Motor neuron (in vitro differentiated cells): ENCODE measurements at regions of chr9 and their contacts with region 1.

Region 1: DNA sequence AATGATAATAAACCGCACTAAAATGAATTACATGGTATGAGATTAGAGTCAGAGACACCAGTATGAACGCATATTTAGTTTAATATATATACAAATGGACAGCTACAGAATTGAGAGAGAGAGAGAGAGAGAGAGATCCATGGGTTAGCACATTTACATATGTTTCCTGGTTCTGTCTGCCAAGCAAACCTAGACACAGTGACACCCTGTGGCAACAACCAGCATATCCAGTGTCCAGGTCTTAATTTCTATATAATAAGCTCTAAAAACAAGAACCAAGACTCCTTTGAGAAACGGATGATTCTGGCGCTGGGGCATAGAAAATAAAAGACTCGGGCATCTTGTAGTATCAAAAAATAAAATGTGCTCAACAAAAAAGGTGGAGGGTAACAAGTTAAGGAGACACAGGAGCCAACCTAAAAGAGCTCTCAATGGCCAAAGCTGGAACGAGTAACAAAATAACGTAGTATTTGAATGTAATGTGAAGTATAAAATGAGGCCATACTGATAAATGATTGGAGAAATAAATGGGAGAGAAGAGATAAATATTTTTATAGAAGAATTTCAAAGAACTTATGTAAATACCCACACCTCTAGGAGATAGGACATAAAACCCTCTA is 84.5 kb downstream of the RFX3 start:
- ATAC-seq: peak in 4 of 8 experiments; percentile 63 to 84 (median 76)
- H3K4me3 ChIP-seq: no peak overlapping the region
- H3K27ac ChIP-seq: no peak overlapping the region
- H3K4me1 ChIP-seq: no peaks in the 10 kb centered on the region

Region 2: GRCh38 chr9:3240656-3241268 is 200.5 kb before region 1 on chr9:
- in situ Hi-C with region 1: loop called in 1 of 9 experiments (anchors 25 kb)
- ATAC-seq: peak; percentile 32 to 96 (median 76)
- H3K4me3 ChIP-seq: no peak overlapping the region
- H3K27ac ChIP-seq: no peak overlapping the region
- H3K4me1 ChIP-seq: peaks cover 0 to 3% of the 10 kb centered on the region in 2 donors

Region 3: GRCh38 chr9:3261484-3261883 is 179.8 kb before region 1 on chr9:
- in situ Hi-C with region 1: loop called in 1 of 9 experiments (anchors 25 kb)
- ATAC-seq: no peak
- H3K4me3 ChIP-seq: no peak overlapping the region
- H3K27ac ChIP-seq: no peak overlapping the region
- H3K4me1 ChIP-seq: no peaks in the 10 kb centered on the region

Region 4: DNA sequence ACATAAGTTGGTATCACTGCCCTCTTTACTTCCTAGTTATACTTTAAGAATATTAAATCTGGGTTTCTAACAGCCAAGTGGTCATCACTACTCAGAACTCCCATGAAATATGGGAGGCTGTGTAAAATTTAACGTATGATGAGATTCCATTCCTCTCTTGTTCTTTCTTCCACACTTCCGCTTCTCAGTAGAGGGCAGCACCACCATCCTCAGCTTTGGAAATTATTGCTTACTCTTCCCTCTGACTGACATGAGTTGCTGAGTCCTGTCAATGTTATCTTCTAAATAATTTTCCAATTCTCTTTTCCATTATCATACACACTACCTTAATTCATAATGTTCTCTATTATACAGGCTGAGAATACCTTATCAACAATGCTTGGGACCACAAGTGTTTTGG is 109.5 kb before region 1 on chr9:
- in situ Hi-C with region 1: loop called in 1 of 9 experiments (anchors 25 kb)
- ATAC-seq: peak in 3 of 8 experiments; percentile 30 to 43 (median 32)
- H3K4me3 ChIP-seq: no peak overlapping the region
- H3K27ac ChIP-seq: no peak overlapping the region
- H3K4me1 ChIP-seq: no peaks in the 10 kb centered on the region